ENCODE measurements at regions of chr11 and their contacts with region 1.

Region 1: DNA sequence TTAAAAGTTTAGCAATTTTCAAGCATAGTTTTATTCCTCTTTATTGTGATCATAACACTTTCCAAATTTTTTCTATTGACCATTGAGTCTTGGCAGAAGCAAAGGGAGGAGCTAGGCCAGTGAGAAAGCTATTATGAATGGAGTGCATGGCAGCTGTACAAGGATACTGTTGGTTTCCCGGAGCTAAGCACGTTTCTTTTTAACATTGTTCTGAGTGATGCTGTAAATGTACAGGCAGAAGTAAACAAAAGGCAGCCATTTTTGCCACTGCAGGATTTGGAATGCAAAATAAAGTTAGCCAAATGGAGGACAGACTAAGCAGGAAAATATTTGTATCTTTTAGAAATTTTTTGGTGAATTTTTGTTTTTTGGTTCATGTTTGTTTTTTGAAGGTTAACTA is 16.2 kb downstream of the CBL start:
- DNase-seq: no peak
- ATAC-seq: no peak
- H3K4me3 Mint-ChIP-seq: no peak overlapping the region
- H3K27ac Mint-ChIP-seq: peak overlapping the region; percentile 28
- H3K4me1 Mint-ChIP-seq: peaks cover 65% of the 10 kb centered on the region
- H3K27me3 Mint-ChIP-seq: no peaks in the 10 kb centered on the region

Region 2: DNA sequence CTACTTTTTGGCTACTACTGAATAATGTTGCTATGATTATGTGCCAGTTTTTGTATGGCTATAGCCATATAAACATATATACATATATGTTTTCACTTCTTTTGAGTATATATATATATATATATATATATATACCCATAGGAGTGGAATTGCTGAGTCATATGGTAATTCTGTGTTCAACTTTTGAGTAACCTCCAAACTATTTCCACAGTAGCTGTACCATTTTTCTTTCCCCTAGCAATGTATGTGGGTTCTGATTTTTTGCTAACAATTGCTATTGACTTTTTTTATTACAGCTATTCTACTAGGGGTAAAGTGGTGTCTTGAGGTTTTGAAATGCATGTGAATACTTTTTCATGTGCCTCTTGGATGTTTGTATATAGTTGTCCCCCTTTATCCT is 14.2 kb after region 1 on chr11:
- CTCF ChIA-PET with region 1: no interaction called
- POLR2A ChIA-PET with region 1: no interaction called
- intact Hi-C with region 1: loop called in 1 of 2 experiments (anchors 1 kb)
- DNase-seq: no peak
- ATAC-seq: peak; percentile 59
- H3K4me3 Mint-ChIP-seq: no peak overlapping the region
- H3K27ac Mint-ChIP-seq: peak overlapping the region; percentile 88
- H3K4me1 Mint-ChIP-seq: peaks cover 53% of the 10 kb centered on the region
- H3K27me3 Mint-ChIP-seq: no peaks in the 10 kb centered on the region

Region 3: DNA sequence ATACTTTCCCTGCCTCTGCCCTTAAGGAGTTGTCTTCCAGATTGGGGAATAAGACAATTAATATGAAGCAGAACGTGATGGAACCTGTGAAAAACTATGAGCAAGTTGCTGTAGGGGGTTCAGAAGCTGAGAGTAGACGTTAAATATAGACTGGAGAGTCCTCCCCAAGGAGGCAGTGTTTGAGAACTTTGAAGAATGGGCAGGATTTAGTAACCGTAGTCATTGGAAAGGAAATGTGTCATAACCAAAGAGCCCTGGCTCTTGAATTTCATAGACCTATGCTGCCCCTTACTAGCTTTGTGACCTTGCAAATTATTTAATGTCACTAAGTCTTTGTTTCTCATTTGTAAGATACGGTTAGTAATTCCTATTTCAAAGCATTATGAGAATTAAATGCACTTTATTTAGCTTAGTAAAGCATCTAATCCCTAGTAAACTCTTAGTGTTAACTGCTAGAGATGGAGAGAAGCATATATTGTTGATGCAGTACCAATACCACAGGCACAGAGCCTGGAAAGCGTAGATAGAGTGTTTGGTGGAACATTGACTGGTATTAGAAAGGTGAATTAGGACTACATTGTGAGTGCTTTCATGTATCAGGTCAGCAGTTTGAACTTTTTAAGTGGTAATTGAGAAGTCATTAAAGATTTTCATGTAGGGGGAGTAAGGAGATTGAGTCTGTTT is 40.5 kb after region 1 on chr11:
- CTCF ChIA-PET with region 1: interaction called, 5 read pairs
- POLR2A ChIA-PET with region 1: no interaction called
- intact Hi-C with region 1: loop called (anchors 1 kb)
- DNase-seq: no peak
- ATAC-seq: peak; percentile 80
- H3K4me3 Mint-ChIP-seq: no peak overlapping the region
- H3K27ac Mint-ChIP-seq: no peak overlapping the region
- H3K4me1 Mint-ChIP-seq: peaks cover 66% of the 10 kb centered on the region
- H3K27me3 Mint-ChIP-seq: no peaks in the 10 kb centered on the region

Measured in activated CD4-positive, alpha-beta T cell treated with anti-CD3 and anti-CD28 coated beads for 36 hours (primary cell).